Heart left ventricle (tissue), 16 donors: ENCODE measurements at regions of chr19 and their contacts with region 1.

Region 1: DNA sequence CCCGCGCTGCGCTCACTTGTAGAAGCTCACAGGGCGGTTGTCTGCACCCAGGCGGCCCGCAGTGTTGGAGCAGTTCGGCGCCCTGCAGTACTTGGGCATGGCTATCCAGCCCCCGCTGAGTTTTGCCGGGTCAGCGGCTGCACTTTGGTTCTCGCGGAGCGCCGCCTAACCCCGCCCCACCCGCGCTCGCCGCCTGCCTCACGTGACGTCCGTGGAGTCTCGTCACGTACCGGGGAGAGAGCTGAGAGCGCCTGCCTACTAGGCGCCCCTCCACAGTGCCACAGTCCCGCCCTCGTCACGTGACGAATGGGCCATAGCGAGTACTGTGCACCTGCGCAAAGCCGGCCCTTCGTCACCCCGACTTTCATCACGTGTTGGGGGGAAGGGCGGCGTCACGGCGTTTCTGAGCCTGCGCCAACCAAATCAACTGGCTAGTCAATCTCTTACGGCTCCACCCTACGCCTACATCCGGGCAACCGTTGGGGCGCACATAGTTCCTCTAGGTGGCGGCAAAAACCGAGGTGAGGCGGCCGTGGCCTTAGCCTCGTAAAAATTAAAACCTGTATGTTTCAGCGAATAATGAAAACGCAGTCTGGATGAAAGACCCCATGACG is at the start of gene THAP8:
- DNase-seq: peak; percentile 100
- ATAC-seq: peak; percentile 96 to 98 (median 97)
- H3K4me3 ChIP-seq: peak within 1 kb of the TSS; percentile 16 to 80 (median 68)
- H3K27ac ChIP-seq: peak within 1 kb of the TSS; percentile 70 to 98 (median 92)
- H3K4me1 ChIP-seq: peaks cover 0 to 19% (median 13%) of the 10 kb centered on the region in 12 donors
- H3K27me3 ChIP-seq: no peaks in the 10 kb centered on the region
- CTCF ChIP-seq: peak in 11 of 12 donors; percentile 36 to 88 (median 63)
- POLR2A ChIP-seq: peak in 1 of 2 donors; percentile 73
- total RNA-seq, gene THAP8: 2.3 to 6.0 (median 4.3) TPM

Region 2: GRCh38 chr19:35740423-35741202 is 313.6 kb before region 1 on chr19:
- intact Hi-C with region 1: loop called in 1 of 10 experiments (anchors 10 kb)
- DNase-seq: peak; percentile 97 to 99 (median 99)
- ATAC-seq: peak; percentile 83 to 89 (median 86)
- H3K4me3 ChIP-seq: peak overlapping the region; percentile 20 to 80 (median 64)
- H3K27ac ChIP-seq: peak overlapping the region in 11 of 12 donors; percentile 60 to 95 (median 74)
- H3K4me1 ChIP-seq: peaks cover 7 to 52% (median 23%) of the 10 kb centered on the region in 12 donors
- H3K27me3 ChIP-seq: no peaks in the 10 kb centered on the region
- CTCF ChIP-seq: peak in 3 of 12 donors; percentile 10 to 31 (median 24)
- POLR2A ChIP-seq: peak in 1 of 2 donors; percentile 33

Region 3: GRCh38 chr19:35995048-35995993 is 58.9 kb before region 1 on chr19 and contains the start of gene SDHAF1:
- intact Hi-C with region 1: loop called in 3 of 10 experiments (anchors 1 to 5 kb)
- DNase-seq: peak; percentile 97 to 98 (median 98)
- ATAC-seq: peak; percentile 95 to 98 (median 96)
- H3K4me3 ChIP-seq: peak within 1 kb of the TSS; percentile 67 to 99 (median 90)
- H3K27ac ChIP-seq: peak within 1 kb of the TSS in 11 of 12 donors; percentile 68 to 88 (median 83)
- H3K4me1 ChIP-seq: peaks cover 4 to 43% (median 25%) of the 10 kb centered on the region in 12 donors
- H3K27me3 ChIP-seq: no peaks in the 10 kb centered on the region
- CTCF ChIP-seq: peak in 1 of 12 donors; percentile 11
- POLR2A ChIP-seq: peak in 1 of 2 donors; percentile 49
- total RNA-seq, gene SDHAF1: 9.7 to 41.8 (median 11.4) TPM

Region 4: DNA sequence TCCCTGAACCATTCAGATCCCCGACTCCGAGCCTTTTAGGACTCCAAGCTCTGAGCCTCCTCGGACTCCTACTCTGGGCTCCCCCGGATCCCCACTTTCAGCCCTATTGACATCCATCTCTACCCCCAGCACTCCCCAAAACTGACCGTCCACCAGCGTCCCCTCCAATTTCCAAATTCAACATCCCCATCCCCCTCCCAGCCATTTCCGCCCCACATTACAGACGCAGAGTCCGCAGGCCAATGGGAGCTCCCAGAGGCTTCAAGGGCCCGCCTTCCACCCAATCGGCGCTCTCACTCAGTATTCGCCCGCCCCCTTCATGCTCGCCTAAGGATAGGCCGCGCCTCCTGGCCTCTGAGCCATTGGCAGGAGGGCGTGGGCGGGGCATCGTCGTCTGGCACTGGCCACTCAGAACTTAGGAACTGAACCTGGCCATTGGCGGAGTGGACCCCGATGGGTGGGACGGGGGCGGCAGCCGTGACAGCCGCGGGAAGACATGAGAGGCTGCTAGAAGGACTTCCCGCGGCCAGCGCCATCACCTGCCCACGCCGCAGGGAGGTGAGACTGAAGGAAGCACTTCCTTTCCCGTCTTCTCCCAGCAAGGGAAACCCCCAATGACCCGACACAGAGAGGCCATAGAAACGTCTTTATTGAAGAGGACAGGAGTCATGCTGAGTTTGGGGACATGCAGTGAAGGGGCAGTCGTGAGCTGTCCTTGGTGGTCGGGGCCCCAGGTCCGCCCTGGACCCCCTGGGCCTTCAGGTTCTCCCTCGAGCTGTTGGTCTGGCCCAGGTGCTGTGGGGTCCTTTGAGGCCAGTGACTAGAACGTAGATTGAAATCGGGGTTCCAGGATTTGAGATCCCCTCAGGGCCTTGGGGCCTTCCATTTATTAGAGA is 39.9 kb before region 1 on chr19 and contains the start of gene ALKBH6:
- intact Hi-C with region 1: loop called in 4 of 10 experiments (anchors 1 to 5 kb)
- DNase-seq: peak; percentile 100
- ATAC-seq: peak; percentile 98 to 100 (median 100)
- H3K4me3 ChIP-seq: peak within 1 kb of the TSS; percentile 44 to 98 (median 74)
- H3K27ac ChIP-seq: peak within 1 kb of the TSS; percentile 25 to 89 (median 71)
- H3K4me1 ChIP-seq: peaks cover 0 to 21% (median 11%) of the 10 kb centered on the region in 12 donors
- H3K27me3 ChIP-seq: no peaks in the 10 kb centered on the region
- CTCF ChIP-seq: peak in 1 of 12 donors; percentile 15
- POLR2A ChIP-seq: peak in 1 of 2 donors; percentile 13
- total RNA-seq, gene ALKBH6: 7.3 to 22.5 (median 11.5) TPM

Region 5: DNA sequence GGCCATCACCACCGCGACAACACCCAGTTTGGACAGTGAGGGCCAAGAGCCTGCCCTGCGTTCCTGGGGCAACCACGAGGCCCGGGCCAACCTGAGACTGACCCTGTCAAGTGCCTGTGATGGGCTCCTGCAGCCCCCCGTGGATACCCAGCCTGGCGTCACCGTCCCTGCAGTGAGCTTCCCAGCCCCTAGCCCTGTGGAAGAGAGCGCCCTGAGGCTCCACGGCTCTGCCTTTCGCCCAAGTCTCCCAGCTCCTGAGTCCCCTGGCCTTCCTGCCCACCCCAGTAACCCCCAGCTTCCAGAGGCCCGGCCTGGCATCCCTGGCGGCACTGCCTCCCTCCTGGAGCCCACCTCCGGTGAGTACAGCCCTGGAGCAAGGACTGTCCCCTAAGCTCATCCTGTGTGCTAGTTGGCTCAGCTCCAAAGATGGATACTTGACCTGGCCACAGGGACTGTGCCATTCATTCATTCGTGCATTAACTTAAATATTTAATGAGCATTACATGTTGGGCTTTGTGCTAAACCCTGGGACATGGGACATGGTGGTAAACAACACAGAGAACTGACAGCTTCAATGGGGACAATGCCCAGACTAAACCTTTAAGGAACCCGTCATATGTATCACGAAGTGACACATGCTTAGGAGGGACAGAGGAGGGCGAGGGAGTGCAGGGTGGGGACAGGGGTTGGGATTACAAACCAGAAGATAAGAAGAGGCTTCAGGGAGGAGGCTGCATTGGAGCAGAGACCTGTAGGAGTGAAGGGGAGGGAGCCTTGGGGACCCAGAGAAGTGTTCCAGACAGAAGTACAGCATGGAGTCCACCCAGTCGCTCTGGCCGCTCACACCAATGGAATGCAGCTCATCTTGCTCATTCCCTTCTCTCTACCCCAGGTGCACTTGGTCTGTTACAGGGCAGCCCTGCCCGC is 49.7 kb after region 1 on chr19:
- intact Hi-C with region 1: loop called in 2 of 10 experiments (anchors 5 kb)
- DNase-seq: no peak
- ATAC-seq: no peak
- H3K4me3 ChIP-seq: no peak overlapping the region
- H3K27ac ChIP-seq: no peak overlapping the region
- H3K4me1 ChIP-seq: peaks cover 0 to 34% (median 15%) of the 10 kb centered on the region in 12 donors
- H3K27me3 ChIP-seq: no peaks in the 10 kb centered on the region
- CTCF ChIP-seq: no peak
- POLR2A ChIP-seq: no peak

Region 6: GRCh38 chr19:36114763-36115452 is 60.7 kb after region 1 on chr19 and contains the start of gene POLR2I:
- intact Hi-C with region 1: loop called in 6 of 10 experiments (anchors 1 to 5 kb)
- DNase-seq: peak; percentile 99 to 100 (median 100)
- ATAC-seq: peak; percentile 95 to 99 (median 97)
- H3K4me3 ChIP-seq: peak within 1 kb of the TSS; percentile 60 to 98 (median 90)
- H3K27ac ChIP-seq: peak within 1 kb of the TSS; percentile 28 to 93 (median 88)
- H3K4me1 ChIP-seq: peaks cover 3 to 32% (median 19%) of the 10 kb centered on the region in 12 donors
- H3K27me3 ChIP-seq: no peaks in the 10 kb centered on the region
- CTCF ChIP-seq: no peak
- POLR2A ChIP-seq: peak in 1 of 2 donors; percentile 50
- total RNA-seq, gene POLR2I: 80.4 to 153 (median 107) TPM

Region 7: GRCh38 chr19:36139473-36140303 is 85.5 kb after region 1 on chr19 and contains the start of gene CAPNS1:
- intact Hi-C with region 1: no loop called
- DNase-seq: peak; percentile 98 to 99 (median 99)
- ATAC-seq: peak; percentile 91 to 93 (median 92)
- H3K4me3 ChIP-seq: peak within 1 kb of the TSS; percentile 80 to 100 (median 95)
- H3K27ac ChIP-seq: peak within 1 kb of the TSS; percentile 93 to 100 (median 99)
- H3K4me1 ChIP-seq: peaks cover 0 to 30% (median 16%) of the 10 kb centered on the region in 12 donors
- H3K27me3 ChIP-seq: no peaks in the 10 kb centered on the region
- CTCF ChIP-seq: peak in 5 of 12 donors; percentile 14 to 19 (median 17)
- POLR2A ChIP-seq: peak; percentile 95 to 97
- total RNA-seq, gene CAPNS1: 272 to 1,054 (median 860) TPM

Region 8: GRCh38 chr19:36363845-36364244 is 309.6 kb after region 1 on chr19:
- intact Hi-C with region 1: no loop called
- DNase-seq: no peak
- ATAC-seq: no peak
- H3K4me3 ChIP-seq: no peak overlapping the region
- H3K27ac ChIP-seq: peak overlapping the region in 1 of 12 donors; percentile 7
- H3K4me1 ChIP-seq: peaks cover 0 to 3% (median 0%) of the 10 kb centered on the region in 12 donors
- H3K27me3 ChIP-seq: no peaks in the 10 kb centered on the region
- CTCF ChIP-seq: no peak
- POLR2A ChIP-seq: no peak